MCF 10A (cell line): ENCODE measurements at regions of chr20 and their contacts with region 1.

Region 1: GRCh38 chr20:58870239-58871014 is 17.9 kb downstream of the GNAS start:
- DNase-seq: peak; percentile 75
- H3K4me3 Mint-ChIP-seq: no peak overlapping the region
- H3K27ac Mint-ChIP-seq: no peak overlapping the region
- H3K4me1 Mint-ChIP-seq: peaks cover 1% of the 10 kb centered on the region
- H3K27me3 Mint-ChIP-seq: peaks cover 26% of the 10 kb centered on the region
- CTCF ChIP-seq: peak; percentile 87

Region 2: GRCh38 chr20:58670659-58671058 is 199.8 kb before region 1 on chr20:
- CTCF ChIA-PET with region 1: no interaction called
- POLR2A ChIA-PET with region 1: no interaction called
- intact Hi-C with region 1: no loop called
- DNase-seq: no peak
- H3K4me3 Mint-ChIP-seq: no peak overlapping the region
- H3K27ac Mint-ChIP-seq: no peak overlapping the region
- H3K4me1 Mint-ChIP-seq: no peaks in the 10 kb centered on the region
- H3K27me3 Mint-ChIP-seq: no peaks in the 10 kb centered on the region
- CTCF ChIP-seq: no peak

Region 3: GRCh38 chr20:58778760-58779159 is 91.7 kb before region 1 on chr20:
- CTCF ChIA-PET with region 1: no interaction called
- POLR2A ChIA-PET with region 1: no interaction called
- intact Hi-C with region 1: no loop called
- DNase-seq: no peak
- H3K4me3 Mint-ChIP-seq: no peak overlapping the region
- H3K27ac Mint-ChIP-seq: no peak overlapping the region
- H3K4me1 Mint-ChIP-seq: no peaks in the 10 kb centered on the region
- H3K27me3 Mint-ChIP-seq: peaks cover 97% of the 10 kb centered on the region
- CTCF ChIP-seq: no peak

Region 4: GRCh38 chr20:58883241-58883691 is 12.8 kb after region 1 on chr20:
- CTCF ChIA-PET with region 1: interaction called, 25 read pairs
- POLR2A ChIA-PET with region 1: interaction called, 5 read pairs
- intact Hi-C with region 1: no loop called
- DNase-seq: no peak
- H3K4me3 Mint-ChIP-seq: no peak overlapping the region
- H3K27ac Mint-ChIP-seq: no peak overlapping the region
- H3K4me1 Mint-ChIP-seq: no peaks in the 10 kb centered on the region
- H3K27me3 Mint-ChIP-seq: peaks cover 20% of the 10 kb centered on the region
- CTCF ChIP-seq: no peak

Region 5: DNA sequence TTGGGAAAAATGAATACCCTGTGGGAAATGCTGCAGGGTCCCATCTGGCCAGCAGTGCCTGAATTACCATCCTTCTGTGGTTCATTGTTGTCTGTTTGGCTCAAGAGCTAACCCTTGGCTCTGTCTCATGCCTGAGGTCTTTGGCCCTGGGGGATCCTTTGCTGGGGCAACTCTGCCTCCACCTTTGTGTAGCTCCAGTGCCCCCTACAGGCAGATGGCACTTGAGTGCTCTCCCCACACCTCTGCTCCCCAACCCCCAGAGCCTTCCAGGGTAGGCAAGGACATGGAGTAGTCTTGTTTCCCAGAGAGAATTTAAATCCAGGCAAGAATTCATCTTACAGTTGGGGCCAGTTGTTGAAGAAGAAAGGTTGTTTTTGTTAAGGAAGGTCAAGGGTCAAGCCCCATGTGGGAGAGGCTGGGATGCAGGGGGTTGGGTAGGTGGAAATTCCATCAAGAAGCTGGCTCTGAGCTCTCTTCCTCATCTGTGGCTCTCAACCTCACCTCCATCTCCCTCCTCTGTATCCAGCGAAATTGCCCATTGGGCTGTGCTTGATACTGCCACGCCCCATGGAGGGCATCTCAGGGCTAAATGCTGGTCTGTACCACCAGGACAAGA is 337.4 kb after region 1 on chr20:
- CTCF ChIA-PET with region 1: interaction called, 5 read pairs
- POLR2A ChIA-PET with region 1: no interaction called
- intact Hi-C with region 1: loop called (anchors 5 kb)
- DNase-seq: peak; percentile 59
- H3K4me3 Mint-ChIP-seq: no peak overlapping the region
- H3K27ac Mint-ChIP-seq: no peak overlapping the region
- H3K4me1 Mint-ChIP-seq: no peaks in the 10 kb centered on the region
- H3K27me3 Mint-ChIP-seq: peaks cover 96% of the 10 kb centered on the region
- CTCF ChIP-seq: peak; percentile 52

Region 6: DNA sequence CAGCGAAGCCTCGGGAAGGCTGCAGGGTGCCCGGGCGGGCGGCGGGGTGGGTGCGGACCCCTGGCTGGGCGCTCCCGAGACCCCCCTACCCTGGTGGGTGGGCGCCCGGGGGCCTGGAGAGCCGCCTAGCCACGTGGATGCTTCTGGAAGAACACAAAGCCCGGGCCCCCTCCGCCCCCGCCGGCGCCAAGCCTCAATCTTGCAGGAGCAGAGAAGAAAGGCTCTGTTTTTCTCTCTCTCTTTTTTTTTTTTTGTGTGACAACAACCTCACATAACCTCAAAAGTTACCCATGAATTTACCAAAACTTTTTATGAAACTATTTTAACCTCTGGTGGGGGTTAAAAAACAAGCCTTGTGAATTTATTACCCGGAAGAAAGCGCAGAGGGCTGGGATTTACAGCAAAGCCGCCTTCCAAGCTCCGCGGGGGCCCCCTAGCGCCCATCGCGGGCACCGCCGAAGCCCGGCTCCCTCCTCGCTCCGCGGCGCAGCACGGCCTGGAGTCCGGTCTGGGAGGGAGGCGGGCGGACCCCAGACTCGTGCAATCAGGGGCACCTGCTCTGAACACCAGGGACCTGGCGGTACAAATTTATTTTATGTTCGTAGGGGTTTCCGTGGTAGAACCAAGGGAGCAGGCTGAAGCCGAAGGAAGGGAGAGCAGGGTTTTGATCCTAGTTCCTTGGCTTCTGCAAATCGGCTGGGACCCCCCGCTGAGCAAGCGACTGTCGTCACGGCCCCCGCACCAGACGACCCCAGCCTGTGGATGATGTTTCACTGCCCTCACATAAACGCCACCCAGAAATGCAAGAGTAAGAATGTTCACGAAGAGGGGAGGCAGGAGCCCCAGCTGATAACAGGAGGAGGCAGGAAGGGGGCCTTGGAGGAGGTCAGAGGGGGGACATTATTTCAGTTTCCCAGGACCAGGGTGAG is 352.1 kb after region 1 on chr20:
- CTCF ChIA-PET with region 1: interaction called, 44 read pairs
- POLR2A ChIA-PET with region 1: interaction called, 5 read pairs
- intact Hi-C with region 1: loop called (anchors 1 kb)
- DNase-seq: peak; percentile 55
- H3K4me3 Mint-ChIP-seq: peak overlapping the region; percentile 66
- H3K27ac Mint-ChIP-seq: no peak overlapping the region
- H3K4me1 Mint-ChIP-seq: no peaks in the 10 kb centered on the region
- H3K27me3 Mint-ChIP-seq: peaks cover 96% of the 10 kb centered on the region
- CTCF ChIP-seq: peak; percentile 95

Region 7: DNA sequence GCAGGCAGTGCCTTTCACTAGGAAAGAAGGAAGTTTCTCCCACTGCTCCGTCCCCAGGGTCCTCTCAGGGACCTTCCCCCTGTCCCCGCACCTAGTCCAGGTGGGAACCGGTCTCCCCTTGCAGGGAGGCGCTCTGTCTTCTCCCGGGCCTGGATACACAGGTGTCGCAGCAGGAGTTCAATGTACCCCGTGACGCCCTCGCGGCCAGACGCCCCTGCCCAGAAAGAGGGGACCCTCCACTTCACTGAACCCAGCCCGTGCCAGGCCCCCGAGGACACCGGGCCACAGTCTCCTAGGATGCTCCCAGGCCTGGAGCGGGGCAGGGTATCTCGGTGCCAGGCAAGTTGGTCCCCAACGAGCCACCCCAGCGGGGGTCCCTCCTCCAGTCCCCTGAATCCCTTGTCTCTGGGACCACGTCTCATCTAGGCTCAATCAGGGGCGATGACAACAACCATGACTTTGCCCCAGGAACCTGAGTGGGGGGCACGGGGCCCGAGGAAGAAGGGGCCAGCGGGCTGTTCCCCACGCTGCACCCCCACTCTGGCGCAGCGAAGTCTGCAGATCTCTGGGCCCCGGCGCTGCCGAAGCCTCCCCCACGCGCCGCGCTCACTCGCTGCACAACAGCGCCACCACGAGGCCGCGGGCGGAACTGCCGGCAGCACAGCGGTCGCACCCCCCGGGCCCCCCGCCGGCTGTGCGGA is 533.0 kb after region 1 on chr20:
- CTCF ChIA-PET with region 1: no interaction called
- POLR2A ChIA-PET with region 1: no interaction called
- intact Hi-C with region 1: loop called (anchors 5 kb)
- DNase-seq: peak; percentile 26
- H3K4me3 Mint-ChIP-seq: no peak overlapping the region
- H3K27ac Mint-ChIP-seq: no peak overlapping the region
- H3K4me1 Mint-ChIP-seq: no peaks in the 10 kb centered on the region
- H3K27me3 Mint-ChIP-seq: peaks cover 44% of the 10 kb centered on the region
- CTCF ChIP-seq: peak; percentile 92